Tibial artery (tissue), 4 donors: ENCODE measurements at regions of chr3 and their contacts with region 1.

Region 1: GRCh38 chr3:158727206-158728060 is 4.8 kb downstream of the RARRES1 start:
- DNase-seq: peak in 1 of 2 donors; percentile 63
- H3K4me3 ChIP-seq: peak overlapping the region in 1 of 2 donors; percentile 22
- H3K27ac ChIP-seq: peak overlapping the region; percentile 37 to 72
- H3K4me1 ChIP-seq: peaks cover 0 to 61% (median 42%) of the 10 kb centered on the region in 4 donors
- H3K27me3 ChIP-seq: no peaks in the 10 kb centered on the region
- CTCF ChIP-seq: peak; percentile 79 to 83

Region 2: DNA sequence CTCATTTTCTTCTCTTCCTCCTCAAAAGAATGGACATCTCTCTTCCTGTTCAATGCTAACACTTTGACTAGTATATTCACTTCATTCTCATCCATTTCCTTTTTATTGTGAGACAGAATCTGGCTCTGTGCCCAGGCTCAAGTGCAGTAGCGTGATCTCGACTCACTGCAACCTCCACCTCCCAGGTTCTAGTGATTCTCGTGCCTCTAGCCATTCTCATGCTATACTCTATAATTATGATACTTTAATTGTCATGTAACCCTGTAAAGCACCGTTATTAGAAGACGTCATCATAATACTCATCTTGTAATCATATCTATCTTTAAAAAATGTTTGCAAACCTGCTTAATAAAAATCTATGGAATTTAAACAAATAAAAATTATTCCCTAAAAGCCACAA is 728.2 kb before region 1 on chr3:
- intact Hi-C with region 1: no loop called
- DNase-seq: no peak
- H3K4me3 ChIP-seq: no peak overlapping the region
- H3K27ac ChIP-seq: no peak overlapping the region
- H3K4me1 ChIP-seq: no peaks in the 10 kb centered on the region
- H3K27me3 ChIP-seq: no peaks in the 10 kb centered on the region
- CTCF ChIP-seq: no peak

Region 3: GRCh38 chr3:158570999-158571974 is 156.1 kb before region 1 on chr3 and contains the start of gene MLF1:
- intact Hi-C with region 1: loop called (anchors 10 kb)
- DNase-seq: peak; percentile 97 to 98
- H3K4me3 ChIP-seq: peak within 1 kb of the TSS; percentile 53 to 64
- H3K27ac ChIP-seq: peak within 1 kb of the TSS; percentile 66 to 70
- H3K4me1 ChIP-seq: peaks cover 0 to 15% (median 5%) of the 10 kb centered on the region in 4 donors
- H3K27me3 ChIP-seq: no peaks in the 10 kb centered on the region
- CTCF ChIP-seq: no peak

Region 4: GRCh38 chr3:158790901-158791589 is 63.6 kb after region 1 on chr3:
- intact Hi-C with region 1: loop called (anchors 2 kb)
- DNase-seq: no peak
- H3K4me3 ChIP-seq: peak overlapping the region; percentile 17 to 28
- H3K27ac ChIP-seq: no peak overlapping the region
- H3K4me1 ChIP-seq: peaks cover 0 to 4% (median 2%) of the 10 kb centered on the region in 4 donors
- H3K27me3 ChIP-seq: no peaks in the 10 kb centered on the region
- CTCF ChIP-seq: peak; percentile 65 to 84

Region 5: GRCh38 chr3:158845765-158846350 is 118.4 kb after region 1 on chr3:
- intact Hi-C with region 1: no loop called
- DNase-seq: no peak
- H3K4me3 ChIP-seq: no peak overlapping the region
- H3K27ac ChIP-seq: no peak overlapping the region
- H3K4me1 ChIP-seq: no peaks in the 10 kb centered on the region
- H3K27me3 ChIP-seq: no peaks in the 10 kb centered on the region
- CTCF ChIP-seq: peak; percentile 49 to 51